ENCODE measurements at regions of chr9 and their contacts with region 1.

Region 1: DNA sequence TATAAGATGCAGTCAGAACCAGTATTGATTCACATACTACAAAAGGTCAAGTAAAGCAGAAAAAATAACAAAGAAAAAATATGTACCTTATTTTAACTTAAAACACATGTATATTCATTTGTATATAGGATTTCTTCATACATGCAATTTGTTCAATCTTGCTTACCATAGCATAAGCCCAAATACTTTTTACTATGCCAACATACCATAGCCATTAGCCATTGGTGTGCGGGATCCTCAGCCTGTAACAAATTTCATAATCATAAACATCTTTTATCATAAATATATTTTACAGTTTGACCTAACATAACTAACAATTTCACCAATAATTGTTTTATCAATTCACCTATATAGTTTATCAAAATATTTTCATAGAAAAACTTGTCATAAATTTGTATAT is 51.1 kb downstream of the MPDZ start:
- DNase-seq: no peak
- ATAC-seq: no peak
- H3K4me3 ChIP-seq: no peak overlapping the region
- H3K4me3 Mint-ChIP-seq: no peak overlapping the region
- H3K27ac ChIP-seq: no peak overlapping the region
- H3K27ac Mint-ChIP-seq: no peak overlapping the region
- H3K4me1 ChIP-seq: no peaks in the 10 kb centered on the region
- H3K4me1 Mint-ChIP-seq: no peaks in the 10 kb centered on the region
- H3K27me3 ChIP-seq: no peaks in the 10 kb centered on the region
- H3K27me3 Mint-ChIP-seq: no peaks in the 10 kb centered on the region
- CTCF ChIP-seq: no peak

Region 2: DNA sequence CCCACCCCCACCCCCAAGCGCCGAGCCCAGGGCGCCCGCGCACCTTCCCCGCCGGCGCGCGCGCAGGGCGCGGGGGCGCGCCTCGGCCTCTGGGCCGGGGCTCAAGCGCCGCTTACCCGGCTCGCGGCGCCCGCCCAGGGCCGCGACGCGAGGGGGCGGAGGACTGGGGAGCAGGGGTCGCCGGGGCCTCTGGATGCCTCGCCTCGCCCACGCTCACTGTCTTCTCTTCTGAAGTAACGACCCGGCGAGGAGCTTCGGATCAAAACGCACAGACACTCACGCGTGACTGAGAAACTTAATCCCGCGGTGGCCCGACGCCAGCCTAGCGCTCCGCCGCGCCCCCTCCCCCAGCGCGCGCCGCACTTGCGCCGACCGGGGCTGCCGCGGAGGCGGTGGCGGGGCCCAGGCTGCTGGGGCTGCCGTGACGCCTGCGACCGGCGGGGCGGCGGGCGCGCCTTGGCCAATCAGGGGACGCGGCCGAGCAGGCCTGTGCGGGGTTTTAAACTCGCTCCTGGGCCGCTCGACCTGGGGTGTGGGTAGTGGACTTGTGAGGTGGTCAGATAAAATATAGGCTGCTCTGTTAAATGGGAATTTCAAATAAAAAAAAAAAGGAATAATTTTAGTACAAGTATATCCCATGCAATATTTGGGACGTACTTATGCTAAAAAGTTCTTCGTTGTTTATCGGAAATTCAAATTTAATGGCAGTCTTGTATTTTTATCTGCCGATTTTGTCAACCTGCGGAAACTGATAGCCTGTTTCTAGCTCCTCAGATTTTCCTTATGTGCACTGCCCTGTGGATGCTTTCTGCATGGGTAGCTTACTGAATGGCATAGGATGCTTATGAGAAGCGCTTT is 51.1 kb after region 1 on chr9 and contains the start of gene MPDZ:
- CTCF ChIA-PET with region 1: no interaction called
- POLR2A ChIA-PET with region 1: no interaction called
- intact Hi-C with region 1: loop called in 1 of 2 experiments (anchors 10 kb)
- DNase-seq: no peak
- ATAC-seq: no peak
- H3K4me3 ChIP-seq: no peak within 1 kb of the TSS
- H3K4me3 Mint-ChIP-seq: no peak within 1 kb of the TSS
- H3K27ac ChIP-seq: no peak within 1 kb of the TSS
- H3K27ac Mint-ChIP-seq: no peak within 1 kb of the TSS
- H3K4me1 ChIP-seq: no peaks in the 10 kb centered on the region
- H3K4me1 Mint-ChIP-seq: no peaks in the 10 kb centered on the region
- H3K27me3 ChIP-seq: peaks cover 6 to 14% of the 10 kb centered on the region in 2 experiments
- H3K27me3 Mint-ChIP-seq: peaks cover 26% of the 10 kb centered on the region
- CTCF ChIP-seq: no peak
- total RNA-seq, gene MPDZ: not detected